ENCODE measurements at regions of chr12 and their contacts with region 1.

Region 1: GRCh38 chr12:49098035-49098451 is 3.4 kb upstream of the DHH start:
- DNase-seq: peak; percentile 38
- ATAC-seq: peak; percentile 41; the same call in 1 of the 2 replicates
- H3K4me3 ChIP-seq: no peak overlapping the region
- H3K27ac ChIP-seq: no peak overlapping the region
- H3K4me1 ChIP-seq: peaks cover 11% of the 10 kb centered on the region
- H3K27me3 ChIP-seq: no peaks in the 10 kb centered on the region
- CTCF ChIP-seq: peak; percentile 92

Region 2: DNA sequence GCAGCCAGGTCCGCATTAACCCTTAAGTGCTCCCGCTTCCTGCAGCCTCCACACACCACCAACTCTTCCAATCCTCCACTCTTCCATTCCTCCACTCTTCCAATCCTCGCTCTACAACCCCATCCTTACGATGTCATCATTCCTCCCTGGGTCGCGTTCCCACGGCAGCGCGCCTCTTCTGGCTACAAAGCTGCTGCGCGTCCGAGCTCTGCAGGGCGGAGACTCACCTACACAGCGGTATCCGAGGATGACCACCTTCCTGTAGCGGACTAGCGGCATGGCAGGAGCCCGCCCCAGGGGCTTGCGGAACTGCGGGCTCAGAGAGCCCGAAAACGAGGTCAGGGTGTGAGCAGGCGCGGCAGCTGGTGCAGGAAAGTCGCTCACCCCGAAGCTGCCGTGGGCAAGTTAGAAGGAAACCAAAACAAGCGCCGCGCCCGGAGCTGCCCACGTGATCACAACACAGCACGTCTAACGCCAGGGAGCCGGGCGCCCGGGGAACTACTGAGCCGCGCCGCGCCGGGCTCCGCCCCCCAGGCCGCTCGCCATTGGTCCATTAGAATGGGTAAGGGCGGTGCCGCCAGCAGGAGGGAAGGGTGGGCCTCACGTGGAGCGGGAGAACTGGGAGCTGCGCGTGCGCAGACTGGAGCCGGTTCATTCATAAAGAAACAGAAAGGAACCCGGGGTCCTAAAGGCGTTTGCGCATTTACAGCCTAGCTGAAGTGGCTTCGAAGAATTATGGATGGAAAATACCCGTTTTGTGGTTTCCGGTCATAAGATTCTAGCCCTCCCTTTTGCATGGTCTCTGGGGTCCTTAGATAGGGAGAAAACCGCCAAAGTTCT is 28.3 kb before region 1 on chr12 and contains the start of gene RHEBL1:
- CTCF ChIA-PET with region 1: interaction called, 22 read pairs
- POLR2A ChIA-PET with region 1: no interaction called
- in situ Hi-C with region 1: no loop called
- intact Hi-C with region 1: no loop called
- DNase-seq: peak; percentile 86
- ATAC-seq: peak; percentile 100
- H3K4me3 ChIP-seq: peak within 1 kb of the TSS; percentile 71 to 97
- H3K27ac ChIP-seq: peak within 1 kb of the TSS; percentile 90
- H3K4me1 ChIP-seq: peaks cover 8% of the 10 kb centered on the region
- H3K27me3 ChIP-seq: no peaks in the 10 kb centered on the region
- CTCF ChIP-seq: no peak
- total RNA-seq, gene RHEBL1: 4.7 TPM

Region 3: DNA sequence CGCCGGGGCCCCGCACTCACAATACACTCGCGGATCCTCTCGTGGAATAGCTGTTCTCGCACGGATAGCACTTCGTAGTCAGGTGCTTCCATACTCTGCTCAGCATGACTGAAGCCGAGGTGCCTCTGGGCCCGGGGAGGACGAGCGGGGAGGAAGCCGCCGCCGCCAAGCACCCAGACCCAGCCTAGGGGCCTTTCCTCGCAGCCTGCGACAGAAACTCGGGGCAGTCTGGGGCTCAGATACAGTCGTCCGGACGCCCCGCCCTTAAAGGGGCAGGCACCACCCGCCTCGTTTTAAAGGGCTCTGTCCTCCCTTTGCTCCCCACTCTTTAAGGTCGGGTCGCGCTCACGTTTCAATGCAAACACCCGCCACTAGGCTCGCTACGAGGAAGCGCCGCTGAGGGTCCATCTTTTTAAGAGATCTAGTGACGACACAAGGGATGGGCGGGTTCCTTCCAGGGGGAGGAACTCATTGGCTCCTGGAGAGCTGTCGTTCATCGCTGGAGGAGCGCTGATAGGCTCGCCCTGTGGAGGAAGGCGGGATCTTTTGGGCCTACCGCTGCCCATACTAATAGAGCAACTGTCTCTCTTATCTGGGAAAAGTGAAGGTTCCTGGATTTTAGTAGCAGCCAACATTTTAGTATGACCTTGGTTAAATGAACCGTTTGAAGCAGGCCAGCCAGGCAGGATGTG is 12.6 kb after region 1 on chr12 and contains the start of gene LMBR1L:
- CTCF ChIA-PET with region 1: interaction called, 10 read pairs
- POLR2A ChIA-PET with region 1: no interaction called
- in situ Hi-C with region 1: no loop called
- intact Hi-C with region 1: no loop called
- DNase-seq: peak; percentile 92
- ATAC-seq: peak; percentile 100
- H3K4me3 ChIP-seq: peak within 1 kb of the TSS; percentile 92
- H3K27ac ChIP-seq: peak within 1 kb of the TSS; percentile 80
- H3K4me1 ChIP-seq: peaks cover 14% of the 10 kb centered on the region
- H3K27me3 ChIP-seq: no peaks in the 10 kb centered on the region
- CTCF ChIP-seq: no peak
- total RNA-seq, gene LMBR1L: 34.4 TPM